Sigmoid colon (tissue), 7 donors: ENCODE measurements at regions of chr3 and their contacts with region 1.

Region 1: DNA sequence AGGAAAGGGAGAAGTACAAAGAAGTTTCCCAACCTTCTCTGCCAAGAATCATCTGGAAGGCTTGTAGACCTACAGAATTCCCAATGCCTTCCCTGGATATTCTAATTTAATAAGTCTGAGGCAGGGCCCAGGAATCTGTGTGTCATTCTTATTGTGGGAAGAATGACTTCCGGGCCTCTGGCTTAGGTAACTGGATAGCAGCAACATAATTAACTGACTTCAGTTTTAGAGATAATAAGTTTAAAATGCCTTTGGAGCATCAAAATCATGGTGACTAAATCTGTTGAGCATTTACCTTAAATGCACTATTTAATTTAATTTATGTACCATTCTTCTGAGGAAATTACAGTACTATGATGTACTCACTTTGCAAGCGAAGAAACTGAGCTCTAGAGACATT is 44.3 kb upstream of the TM4SF1 start:
- DNase-seq: no peak
- H3K4me3 ChIP-seq: no peak overlapping the region
- H3K27ac ChIP-seq: no peak overlapping the region
- H3K4me1 ChIP-seq: no peaks in the 10 kb centered on the region
- H3K27me3 ChIP-seq: no peaks in the 10 kb centered on the region
- CTCF ChIP-seq: no peak
- EP300 ChIP-seq: no peak
- POLR2A ChIP-seq: no peak

Region 2: GRCh38 chr3:149435996-149436885 is 14.5 kb after region 1 on chr3:
- intact Hi-C with region 1: loop called (anchors 1 kb)
- DNase-seq: no peak
- H3K4me3 ChIP-seq: no peak overlapping the region
- H3K27ac ChIP-seq: no peak overlapping the region
- H3K4me1 ChIP-seq: no peaks in the 10 kb centered on the region
- H3K27me3 ChIP-seq: no peaks in the 10 kb centered on the region
- CTCF ChIP-seq: no peak
- EP300 ChIP-seq: no peak
- POLR2A ChIP-seq: no peak

Region 3: GRCh38 chr3:149638228-149639092 is 216.7 kb after region 1 on chr3:
- intact Hi-C with region 1: no loop called
- DNase-seq: no peak
- H3K4me3 ChIP-seq: peak overlapping the region; percentile 9 to 33 (median 29)
- H3K27ac ChIP-seq: peak overlapping the region; percentile 61 to 84 (median 70)
- H3K4me1 ChIP-seq: peaks cover 0 to 82% (median 71%) of the 10 kb centered on the region in 4 donors
- H3K27me3 ChIP-seq: no peaks in the 10 kb centered on the region
- CTCF ChIP-seq: no peak
- EP300 ChIP-seq: no peak
- POLR2A ChIP-seq: no peak